ENCODE measurements at regions of chr4 and their contacts with region 1.

Region 1: GRCh38 chr4:109977854-109978501 is 65.3 kb downstream of the EGF start:
- DNase-seq: no peak
- H3K4me3 ChIP-seq: no peak overlapping the region
- H3K27ac ChIP-seq: no peak overlapping the region
- H3K4me1 ChIP-seq: no peaks in the 10 kb centered on the region
- H3K27me3 ChIP-seq: peaks cover 0 to 3% of the 10 kb centered on the region in 2 donors
- CTCF ChIP-seq: peak; percentile 26 to 45

Region 2: GRCh38 chr4:109424093-109424841 is 553.7 kb before region 1 on chr4:
- intact Hi-C with region 1: loop called (anchors 5 kb)
- DNase-seq: no peak
- H3K4me3 ChIP-seq: no peak overlapping the region
- H3K27ac ChIP-seq: no peak overlapping the region
- H3K4me1 ChIP-seq: peaks cover 0 to 4% (median 0%) of the 10 kb centered on the region in 4 donors
- H3K27me3 ChIP-seq: no peaks in the 10 kb centered on the region
- CTCF ChIP-seq: no peak